ENCODE measurements at regions of chr10 and their contacts with region 1.

Region 1: GRCh38 chr10:69337296-69338132 is 59.2 kb downstream of the HK1 start:
- DNase-seq: peak; percentile 84
- H3K4me3 ChIP-seq: no peak overlapping the region
- H3K27ac ChIP-seq: peak overlapping the region; percentile 74 to 77
- H3K4me1 ChIP-seq: peaks cover 51% of the 10 kb centered on the region
- H3K27me3 ChIP-seq: no peaks in the 10 kb centered on the region
- CTCF ChIP-seq: no peak
- POLR2A ChIP-seq: no peak

Region 2: GRCh38 chr10:69375307-69376151 is 38.0 kb after region 1 on chr10:
- intact Hi-C with region 1: loop called (anchors 5 kb)
- DNase-seq: peak; percentile 94
- H3K4me3 ChIP-seq: no peak overlapping the region
- H3K27ac ChIP-seq: peak overlapping the region; percentile 71 to 77
- H3K4me1 ChIP-seq: peaks cover 22% of the 10 kb centered on the region
- H3K27me3 ChIP-seq: no peaks in the 10 kb centered on the region
- CTCF ChIP-seq: peak in 2 of 4 experiments; percentile 26 to 56
- POLR2A ChIP-seq: no peak

Measured in prostate gland (tissue), 2 donors.